K562 (cell line): ENCODE measurements at regions of chr5 and their contacts with region 1.

Region 1: GRCh38 chr5:113513384-113514288 is at the start of gene YTHDC2:
- DNase-seq: peak; percentile 77 to 91 (median 80)
- ATAC-seq: peak; percentile 97
- H3K4me3 ChIP-seq: peak within 1 kb of the TSS; percentile 80
- H3K27ac ChIP-seq: peak within 1 kb of the TSS; percentile 90
- H3K4me1 ChIP-seq: peaks cover 0 to 6% of the 10 kb centered on the region in 2 experiments; a peak in 2 of 5 replicates
- H3K27me3 ChIP-seq: no peaks in the 10 kb centered on the region; a peak in 1 of 5 replicates
- CTCF ChIP-seq: peak; percentile 40 to 54 (median 48); a peak in 5 of 6 replicates
- EP300 ChIP-seq: no peak
- POLR2A ChIP-seq: peak; percentile 91
- RAD21 ChIP-seq: peak; percentile 21 to 52; a peak in 2 of 4 replicates
- polyA plus RNA-seq, gene YTHDC2: 2.7 to 5.1 TPM

Region 2: DNA sequence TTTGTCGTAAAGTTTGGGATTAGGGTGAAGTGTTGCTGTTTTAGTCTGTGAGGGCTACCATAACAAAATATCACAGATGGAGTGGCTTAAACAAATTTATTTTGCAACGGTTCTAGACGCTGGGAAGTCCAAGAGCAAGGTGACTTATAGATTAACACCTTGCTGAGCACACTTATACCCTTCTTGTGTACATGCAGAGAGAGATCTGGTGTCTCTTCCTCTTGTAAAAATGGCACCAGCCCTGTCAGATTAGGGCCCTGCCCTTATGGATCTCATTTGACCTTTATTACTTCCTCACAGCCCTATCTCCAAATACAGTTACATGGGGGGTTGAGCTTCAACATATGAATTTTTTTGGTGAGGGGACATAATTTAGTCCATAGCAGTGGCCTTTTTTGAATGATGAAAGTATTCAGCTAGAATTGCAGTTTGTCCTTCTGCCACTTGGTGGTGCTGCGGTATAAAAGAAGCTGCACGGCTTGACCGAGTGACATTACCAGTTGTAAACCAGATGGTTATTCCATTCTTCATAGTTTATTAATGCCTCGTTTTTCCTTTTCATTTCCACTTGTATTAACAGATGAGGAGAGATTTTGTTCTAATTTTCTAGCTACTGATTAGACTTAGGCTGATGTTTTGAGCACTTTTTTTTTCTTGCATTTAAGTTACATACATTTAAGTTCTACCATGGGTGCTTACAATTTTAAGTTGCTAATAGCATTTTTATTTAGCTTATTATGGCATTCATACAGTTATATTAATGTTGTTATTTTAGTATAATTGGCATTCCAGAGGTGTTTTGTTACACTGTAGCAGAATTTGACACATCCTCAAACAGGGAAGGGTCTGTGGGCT is 517.6 kb before region 1 on chr5:
- CTCF ChIA-PET with region 1: no interaction called
- POLR2A ChIA-PET with region 1: no interaction called
- in situ Hi-C with region 1: no loop called
- intact Hi-C with region 1: loop called (anchors 2 kb)
- DNase-seq: peak; percentile 49 to 81 (median 56)
- ATAC-seq: peak; percentile 91
- H3K4me3 ChIP-seq: no peak overlapping the region
- H3K27ac ChIP-seq: no peak overlapping the region
- H3K4me1 ChIP-seq: no peaks in the 10 kb centered on the region
- H3K27me3 ChIP-seq: no peaks in the 10 kb centered on the region
- CTCF ChIP-seq: peak; percentile 74 to 92 (median 89)
- EP300 ChIP-seq: no peak
- POLR2A ChIP-seq: no peak
- RAD21 ChIP-seq: peak; percentile 85 to 88

Region 3: DNA sequence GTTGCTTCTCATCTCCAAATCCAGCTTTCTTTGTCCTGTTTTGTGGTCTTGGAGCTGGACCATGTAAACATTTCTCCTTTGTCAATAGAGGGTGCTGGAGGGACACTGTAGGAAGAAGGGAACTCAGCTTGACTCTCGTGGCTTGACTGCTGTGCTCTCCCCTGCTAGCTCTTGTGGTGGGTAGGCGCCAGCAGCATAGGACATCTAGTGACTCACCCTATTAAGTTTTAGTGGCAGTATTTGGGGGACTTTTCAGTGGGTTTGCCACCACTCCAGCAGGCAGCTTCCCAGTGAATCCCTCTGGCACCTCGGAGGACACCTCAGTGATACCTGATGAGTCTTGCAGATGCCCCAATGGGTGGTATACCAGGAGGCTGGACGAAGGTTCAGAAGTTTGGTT is 176.7 kb before region 1 on chr5:
- CTCF ChIA-PET with region 1: no interaction called
- POLR2A ChIA-PET with region 1: no interaction called
- in situ Hi-C with region 1: no loop called
- intact Hi-C with region 1: loop called (anchors 5 kb)
- DNase-seq: peak in 1 of 4 experiments; percentile 28
- ATAC-seq: peak; percentile 88
- H3K4me3 ChIP-seq: no peak overlapping the region
- H3K27ac ChIP-seq: no peak overlapping the region
- H3K4me1 ChIP-seq: no peaks in the 10 kb centered on the region
- H3K27me3 ChIP-seq: peaks cover 0 to 3% of the 10 kb centered on the region in 2 experiments; a peak in 2 of 5 replicates
- CTCF ChIP-seq: peak; percentile 42 to 51 (median 44)
- EP300 ChIP-seq: no peak
- POLR2A ChIP-seq: no peak
- RAD21 ChIP-seq: peak in 1 of 2 experiments; percentile 53; a peak in 3 of 4 replicates

Region 4: DNA sequence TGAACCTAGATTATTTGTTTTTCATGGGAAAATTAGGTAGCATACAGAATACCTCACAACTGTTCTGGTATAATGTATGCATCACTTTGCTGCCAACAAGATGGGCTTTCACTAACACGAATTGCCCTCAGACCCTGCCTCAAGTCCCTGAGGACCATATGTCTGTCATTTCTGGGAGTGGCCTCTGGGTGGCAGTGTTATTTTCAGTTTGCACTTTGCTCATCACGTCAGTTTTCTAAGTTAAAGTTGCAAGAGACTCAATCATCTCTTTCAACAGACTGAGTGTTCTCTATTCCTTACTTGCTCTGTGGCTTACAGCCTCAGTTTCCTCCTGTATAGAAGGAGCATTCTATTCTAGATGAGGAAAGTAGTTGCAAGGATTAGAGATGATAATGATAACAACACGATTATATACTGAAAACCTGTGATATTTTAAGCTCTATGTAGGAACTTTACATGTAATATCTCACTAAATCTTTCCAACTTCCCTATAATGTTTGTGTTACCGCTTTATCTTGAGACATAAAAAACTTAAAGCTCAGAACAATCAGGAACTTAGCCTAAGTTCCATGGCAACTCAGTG is 134.6 kb before region 1 on chr5:
- CTCF ChIA-PET with region 1: interaction called, 10 read pairs
- POLR2A ChIA-PET with region 1: no interaction called
- in situ Hi-C with region 1: no loop called
- intact Hi-C with region 1: loop called (anchors 1 kb)
- DNase-seq: peak; percentile 42 to 62 (median 58)
- ATAC-seq: peak; percentile 82
- H3K4me3 ChIP-seq: no peak overlapping the region
- H3K27ac ChIP-seq: no peak overlapping the region
- H3K4me1 ChIP-seq: no peaks in the 10 kb centered on the region
- H3K27me3 ChIP-seq: no peaks in the 10 kb centered on the region
- CTCF ChIP-seq: peak; percentile 56 to 76 (median 73)
- EP300 ChIP-seq: no peak
- POLR2A ChIP-seq: no peak
- RAD21 ChIP-seq: peak; percentile 43 to 76